Activated CD4-positive, alpha-beta T cell treated with anti-CD3 and anti-CD28 coated beads, Interleukin-2, amount 10 ng/mL, durations not matched to agents 7 days and 5 days (primary cell): ENCODE measurements at regions of chr10 and their contacts with region 1.

Region 1: DNA sequence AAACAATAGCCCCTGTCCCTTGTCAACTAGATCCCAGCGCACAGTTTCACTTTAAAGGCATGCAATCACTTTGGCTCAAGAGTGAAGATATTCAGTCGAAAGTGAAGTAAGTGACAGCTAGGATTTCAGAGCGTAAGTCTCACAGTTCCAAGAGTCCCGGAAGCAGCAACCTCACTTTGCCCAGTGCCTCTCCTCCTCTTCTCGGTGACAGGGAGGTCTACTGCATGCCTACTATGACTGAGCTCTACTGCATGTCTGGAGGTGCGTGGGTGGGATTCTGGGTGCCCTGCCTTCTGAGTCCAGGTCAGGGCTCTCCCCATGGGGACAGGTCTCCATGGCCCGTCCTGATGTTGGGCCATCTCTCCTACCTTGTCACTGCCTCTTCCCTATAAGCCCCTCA is 17.0 kb downstream of the PRKCQ start:
- DNase-seq: peak; percentile 60
- H3K4me3 Mint-ChIP-seq: peak overlapping the region; percentile 64
- H3K27ac Mint-ChIP-seq: peak overlapping the region; percentile 85
- H3K4me1 Mint-ChIP-seq: peaks cover 86% of the 10 kb centered on the region
- H3K27me3 Mint-ChIP-seq: no peaks in the 10 kb centered on the region

Region 2: GRCh38 chr10:6542999-6543430 is 20.1 kb before region 1 on chr10:
- CTCF ChIA-PET with region 1: interaction called, 10 read pairs
- POLR2A ChIA-PET with region 1: no interaction called
- DNase-seq: peak; percentile 79
- H3K4me3 Mint-ChIP-seq: peak overlapping the region; percentile 81
- H3K27ac Mint-ChIP-seq: peak overlapping the region; percentile 100
- H3K4me1 Mint-ChIP-seq: peaks cover 82% of the 10 kb centered on the region
- H3K27me3 Mint-ChIP-seq: no peaks in the 10 kb centered on the region

Region 3: DNA sequence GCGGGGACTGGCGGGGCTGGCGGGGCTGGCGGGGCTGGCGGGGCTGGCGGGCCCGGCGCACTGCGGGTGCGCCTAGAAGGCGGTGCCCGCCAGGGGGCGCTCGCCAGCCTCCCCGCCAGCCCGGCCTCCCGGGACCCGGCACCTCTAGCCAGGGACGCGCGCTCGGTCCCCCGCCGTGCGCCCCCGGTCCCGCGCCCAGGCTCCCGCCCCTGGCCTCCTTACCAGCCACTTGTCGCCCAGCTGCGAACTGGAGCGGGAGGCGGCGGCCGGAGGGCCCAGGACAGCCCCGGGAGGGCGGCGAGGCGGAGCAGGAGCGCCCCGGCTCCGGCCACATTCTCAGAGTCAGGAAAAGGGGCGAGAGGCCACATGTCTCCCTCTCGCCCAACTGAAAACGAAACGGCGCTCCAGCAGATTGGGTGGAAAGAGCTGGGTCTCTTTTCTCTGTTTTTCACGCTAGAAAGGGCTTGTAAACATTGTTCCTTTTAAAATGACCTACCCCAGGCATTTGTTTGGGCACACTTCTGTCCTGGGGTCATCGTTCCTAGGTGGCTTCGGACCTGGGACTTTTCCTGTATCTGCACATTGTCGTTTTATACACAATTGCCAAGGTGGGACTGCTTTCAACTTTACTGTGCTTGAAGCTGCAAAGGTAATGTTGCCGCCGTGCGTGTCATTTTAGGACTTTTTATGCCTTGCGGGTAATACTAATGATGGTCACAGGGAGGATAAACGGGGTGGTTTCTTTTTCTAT is 17.4 kb after region 1 on chr10:
- CTCF ChIA-PET with region 1: interaction called, 26 read pairs
- POLR2A ChIA-PET with region 1: interaction called, 3 read pairs
- DNase-seq: peak; percentile 82
- H3K4me3 Mint-ChIP-seq: peak overlapping the region; percentile 92
- H3K27ac Mint-ChIP-seq: peak overlapping the region; percentile 97
- H3K4me1 Mint-ChIP-seq: peaks cover 61% of the 10 kb centered on the region
- H3K27me3 Mint-ChIP-seq: no peaks in the 10 kb centered on the region

Region 4: GRCh38 chr10:7533657-7534479 is 970.8 kb after region 1 on chr10:
- CTCF ChIA-PET with region 1: no interaction called
- POLR2A ChIA-PET with region 1: no interaction called
- DNase-seq: no peak
- H3K4me3 Mint-ChIP-seq: no peak overlapping the region
- H3K27ac Mint-ChIP-seq: no peak overlapping the region
- H3K4me1 Mint-ChIP-seq: peaks cover 3% of the 10 kb centered on the region
- H3K27me3 Mint-ChIP-seq: peaks cover 6% of the 10 kb centered on the region